OCI-LY7 (cell line): ENCODE measurements at regions of chr14 and their contacts with region 1.

Region 1: DNA sequence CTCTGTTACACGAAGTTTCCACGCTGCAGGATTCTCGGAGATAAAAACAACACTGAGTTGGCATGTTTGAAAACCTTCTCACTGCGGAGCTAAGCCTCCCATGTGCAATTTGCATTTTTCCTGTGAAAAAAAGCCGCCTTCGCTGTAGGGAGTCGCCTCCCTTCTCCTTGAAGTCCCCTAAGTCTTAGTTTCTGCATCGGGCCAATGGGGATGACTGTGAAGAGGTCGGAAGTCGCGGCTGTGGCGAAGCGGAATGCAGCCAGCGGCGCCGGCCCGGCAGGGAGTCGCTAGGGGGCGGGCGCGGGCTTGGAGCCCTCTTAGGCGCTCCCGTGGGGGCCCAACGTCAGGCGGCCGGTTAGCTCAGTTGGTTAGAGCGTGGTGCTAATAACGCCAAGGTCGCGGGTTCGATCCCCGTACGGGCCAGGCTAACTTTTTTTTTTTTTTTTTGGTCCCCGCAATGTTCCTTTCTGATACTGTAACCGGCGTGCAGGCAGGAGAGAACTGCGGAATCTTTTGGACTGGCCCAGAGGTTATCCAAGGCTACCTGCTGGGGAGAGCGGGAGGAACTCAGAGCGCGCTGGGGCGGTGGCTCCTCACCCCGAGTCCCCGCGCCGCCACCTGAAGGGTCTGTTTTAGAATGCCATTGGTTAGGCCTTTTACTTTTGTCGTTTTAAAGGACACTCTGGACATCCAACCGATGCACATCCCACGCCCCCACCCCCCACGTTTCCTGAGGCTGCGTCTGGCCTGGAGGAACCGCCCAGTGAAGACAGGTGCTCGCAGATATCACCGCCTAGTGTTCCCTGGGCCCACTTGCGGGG is 2.6 kb upstream of the ZNF839 start:
- DNase-seq: peak; percentile 93
- H3K4me3 ChIP-seq: peak overlapping the region; percentile 66
- H3K27ac ChIP-seq: peak overlapping the region; percentile 70
- H3K4me1 ChIP-seq: peaks cover 53% of the 10 kb centered on the region
- CTCF ChIP-seq: peak; percentile 79

Region 2: GRCh38 chr14:101707068-101707842 is 609.7 kb before region 1 on chr14:
- CTCF ChIA-PET with region 1: no interaction called
- POLR2A ChIA-PET with region 1: no interaction called
- intact Hi-C with region 1: loop called (anchors 2 kb)
- DNase-seq: peak; percentile 83
- H3K4me3 ChIP-seq: no peak overlapping the region
- H3K27ac ChIP-seq: no peak overlapping the region
- H3K4me1 ChIP-seq: peaks cover 6% of the 10 kb centered on the region
- CTCF ChIP-seq: peak; percentile 94

Region 3: DNA sequence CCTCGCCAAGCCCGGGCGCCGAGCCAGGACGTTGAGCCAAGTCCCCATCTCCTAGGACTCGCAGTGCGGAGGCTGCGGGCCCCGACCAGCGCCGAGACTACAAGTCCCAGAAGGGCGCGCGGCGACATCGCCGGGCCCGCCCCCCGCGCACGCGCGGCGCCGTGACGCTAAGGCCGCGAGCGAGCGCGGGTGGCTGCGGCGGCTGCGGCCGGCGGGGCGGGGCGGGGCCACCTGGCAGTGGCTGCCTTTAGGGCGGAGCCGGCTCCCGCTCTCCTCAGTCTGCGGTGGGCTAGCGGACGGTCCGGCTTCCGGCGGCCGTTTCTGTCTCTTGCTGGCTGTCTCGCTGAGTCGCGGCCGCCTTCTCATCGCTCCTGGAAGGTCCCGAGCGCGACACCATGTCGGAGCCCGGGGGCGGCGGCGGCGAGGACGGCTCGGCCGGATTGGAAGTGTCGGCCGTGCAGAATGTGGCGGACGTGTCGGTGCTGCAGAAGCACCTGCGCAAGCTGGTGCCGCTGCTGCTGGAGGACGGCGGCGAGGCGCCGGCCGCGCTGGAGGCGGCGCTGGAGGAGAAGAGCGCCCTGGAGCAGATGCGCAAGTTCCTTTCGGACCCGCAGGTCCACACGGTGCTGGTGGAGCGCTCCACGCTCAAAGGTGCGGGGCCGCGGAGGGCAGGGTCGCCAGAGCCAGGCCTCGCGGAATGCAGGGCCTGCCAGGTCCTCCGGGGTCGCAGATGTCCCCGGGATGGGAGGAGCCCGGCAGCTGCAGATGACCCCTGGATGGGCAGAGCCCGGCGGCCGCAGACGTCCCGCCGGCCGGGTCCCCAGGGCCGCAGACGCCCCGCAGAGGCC is 352.4 kb before region 1 on chr14 and contains the start of gene DYNC1H1:
- CTCF ChIA-PET with region 1: interaction called, 3 read pairs
- POLR2A ChIA-PET with region 1: no interaction called
- intact Hi-C with region 1: loop called (anchors 5 kb)
- DNase-seq: peak; percentile 95
- H3K4me3 ChIP-seq: peak within 1 kb of the TSS; percentile 97
- H3K27ac ChIP-seq: peak within 1 kb of the TSS; percentile 61
- H3K4me1 ChIP-seq: peaks cover 30% of the 10 kb centered on the region
- CTCF ChIP-seq: no peak
- total RNA-seq, gene DYNC1H1: 207 and 209 TPM in 2 replicates

Region 4: GRCh38 chr14:102088012-102088792 is 228.8 kb before region 1 on chr14:
- CTCF ChIA-PET with region 1: no interaction called
- POLR2A ChIA-PET with region 1: interaction called, 9 read pairs
- intact Hi-C with region 1: loop called (anchors 1 kb)
- DNase-seq: peak; percentile 65
- H3K4me3 ChIP-seq: peak overlapping the region; percentile 93
- H3K27ac ChIP-seq: peak overlapping the region; percentile 66
- H3K4me1 ChIP-seq: peaks cover 42% of the 10 kb centered on the region
- CTCF ChIP-seq: no peak

Region 5: DNA sequence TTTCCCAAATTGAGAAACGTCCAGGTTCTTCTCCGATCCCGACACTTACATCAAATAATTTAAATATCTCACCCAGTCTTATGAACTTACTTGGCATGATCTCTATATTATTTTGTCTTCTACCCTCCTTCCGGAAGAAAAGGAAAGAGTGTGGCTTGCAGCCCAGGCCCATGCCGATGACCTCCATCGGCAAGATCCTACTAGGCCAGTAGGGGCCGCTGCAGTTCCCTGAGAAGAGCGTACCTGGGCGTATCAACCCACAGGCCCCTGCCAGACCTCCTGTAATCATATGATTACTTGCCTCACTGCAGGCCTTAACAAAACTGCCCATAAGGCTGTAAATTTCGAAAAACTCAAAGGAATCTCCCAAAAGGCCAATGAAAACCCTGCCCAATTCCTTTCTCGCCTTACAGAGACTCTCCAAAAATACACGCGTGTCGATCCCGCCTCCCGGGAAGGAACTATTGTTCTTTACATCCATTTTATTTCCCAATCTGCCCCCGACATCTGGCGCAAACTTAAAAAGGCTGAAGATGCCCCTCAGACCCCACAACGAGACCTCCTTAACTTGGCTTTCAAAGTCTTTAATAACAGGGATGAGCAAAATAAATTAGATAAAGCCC is 81.6 kb before region 1 on chr14:
- CTCF ChIA-PET with region 1: interaction called, 3 read pairs
- POLR2A ChIA-PET with region 1: no interaction called
- intact Hi-C with region 1: loop called (anchors 1 kb)
- DNase-seq: peak; percentile 79
- H3K4me3 ChIP-seq: no peak overlapping the region
- H3K27ac ChIP-seq: no peak overlapping the region
- H3K4me1 ChIP-seq: peaks cover 9% of the 10 kb centered on the region
- CTCF ChIP-seq: peak; percentile 89

Region 6: DNA sequence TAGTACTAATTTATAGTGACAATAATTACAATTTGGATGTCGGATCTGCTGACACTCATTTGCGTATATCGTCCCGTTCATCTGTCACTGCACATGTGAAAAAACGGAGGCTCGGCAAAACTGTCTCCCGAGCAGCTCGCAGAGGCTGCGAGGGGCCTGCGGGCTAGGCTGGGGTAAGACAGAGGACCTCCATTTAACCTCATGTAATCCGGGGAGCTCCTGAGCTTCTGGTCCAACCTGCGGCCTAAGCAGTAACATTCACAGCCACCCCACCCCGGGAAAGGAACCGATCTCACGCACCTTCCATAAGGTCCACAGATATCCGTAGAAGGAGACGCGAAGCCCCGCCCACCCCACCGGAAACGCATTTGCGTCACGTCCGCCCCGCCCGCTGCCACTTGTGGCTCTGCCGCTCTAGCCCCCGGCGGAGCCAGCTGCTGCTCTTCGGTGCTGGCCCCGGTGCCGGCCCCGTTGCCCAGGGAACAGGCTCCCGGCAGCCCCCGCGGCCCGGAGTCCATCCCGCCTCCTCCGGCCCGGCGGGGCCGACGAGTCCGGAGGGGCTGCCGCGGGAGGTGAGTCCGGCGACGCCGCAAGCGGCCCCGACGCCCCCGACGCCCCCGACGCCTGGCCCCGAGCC is 45.7 kb after region 1 on chr14 and contains the starts of genes CINP and TECPR2:
- CTCF ChIA-PET with region 1: no interaction called
- POLR2A ChIA-PET with region 1: interaction called, 3 read pairs
- intact Hi-C with region 1: loop called (anchors 2 kb)
- DNase-seq: peak; percentile 95
- H3K4me3 ChIP-seq: peak within 1 kb of the TSS; percentile 98
- H3K27ac ChIP-seq: peak within 1 kb of the TSS; percentile 5
- H3K4me1 ChIP-seq: peaks cover 21% of the 10 kb centered on the region
- CTCF ChIP-seq: no peak
- total RNA-seq, gene CINP: 28.2 and 37.7 TPM in 2 replicates
- total RNA-seq, gene TECPR2: 5.3 and 6.8 TPM in 2 replicates

Region 7: GRCh38 chr14:102591889-102592763 is 275.2 kb after region 1 on chr14 and contains the start of gene RCOR1:
- CTCF ChIA-PET with region 1: no interaction called
- POLR2A ChIA-PET with region 1: no interaction called
- intact Hi-C with region 1: loop called (anchors 2 kb)
- DNase-seq: peak; percentile 98
- H3K4me3 ChIP-seq: peak within 1 kb of the TSS; percentile 83
- H3K27ac ChIP-seq: peak within 1 kb of the TSS; percentile 92
- H3K4me1 ChIP-seq: peaks cover 21% of the 10 kb centered on the region
- CTCF ChIP-seq: no peak
- total RNA-seq, gene RCOR1: 12.1 and 22.0 TPM in 2 replicates